Psoas muscle (tissue), 8 donors: ENCODE measurements at regions of chr12 and their contacts with region 1.

Region 1: GRCh38 chr12:21940549-21941505 is at the start of gene ABCC9:
- DNase-seq: peak; percentile 72 to 81
- ATAC-seq: peak; percentile 89 to 92 (median 90)
- H3K4me3 ChIP-seq: peak within 1 kb of the TSS; percentile 80
- H3K27ac ChIP-seq: peak within 1 kb of the TSS; percentile 94
- H3K4me1 ChIP-seq: peaks cover 18% of the 10 kb centered on the region
- H3K27me3 ChIP-seq: no peaks in the 10 kb centered on the region
- CTCF ChIP-seq: no peak
- total RNA-seq, gene ABCC9: 52.7 to 94.9 (median 88.8) TPM

Region 2: GRCh38 chr12:21831791-21832344 is 109.0 kb before region 1 on chr12:
- intact Hi-C with region 1: loop called in 1 of 2 experiments (anchors 10 kb)
- DNase-seq: peak in 1 of 2 donors; percentile 45
- ATAC-seq: peak in 3 of 4 donors; percentile 31 to 42 (median 35)
- H3K4me3 ChIP-seq: no peak overlapping the region
- H3K27ac ChIP-seq: peak overlapping the region; percentile 34
- H3K4me1 ChIP-seq: peaks cover 6% of the 10 kb centered on the region
- H3K27me3 ChIP-seq: no peaks in the 10 kb centered on the region
- CTCF ChIP-seq: no peak